ENCODE measurements at regions of chr6 and their contacts with region 1.

Region 1: DNA sequence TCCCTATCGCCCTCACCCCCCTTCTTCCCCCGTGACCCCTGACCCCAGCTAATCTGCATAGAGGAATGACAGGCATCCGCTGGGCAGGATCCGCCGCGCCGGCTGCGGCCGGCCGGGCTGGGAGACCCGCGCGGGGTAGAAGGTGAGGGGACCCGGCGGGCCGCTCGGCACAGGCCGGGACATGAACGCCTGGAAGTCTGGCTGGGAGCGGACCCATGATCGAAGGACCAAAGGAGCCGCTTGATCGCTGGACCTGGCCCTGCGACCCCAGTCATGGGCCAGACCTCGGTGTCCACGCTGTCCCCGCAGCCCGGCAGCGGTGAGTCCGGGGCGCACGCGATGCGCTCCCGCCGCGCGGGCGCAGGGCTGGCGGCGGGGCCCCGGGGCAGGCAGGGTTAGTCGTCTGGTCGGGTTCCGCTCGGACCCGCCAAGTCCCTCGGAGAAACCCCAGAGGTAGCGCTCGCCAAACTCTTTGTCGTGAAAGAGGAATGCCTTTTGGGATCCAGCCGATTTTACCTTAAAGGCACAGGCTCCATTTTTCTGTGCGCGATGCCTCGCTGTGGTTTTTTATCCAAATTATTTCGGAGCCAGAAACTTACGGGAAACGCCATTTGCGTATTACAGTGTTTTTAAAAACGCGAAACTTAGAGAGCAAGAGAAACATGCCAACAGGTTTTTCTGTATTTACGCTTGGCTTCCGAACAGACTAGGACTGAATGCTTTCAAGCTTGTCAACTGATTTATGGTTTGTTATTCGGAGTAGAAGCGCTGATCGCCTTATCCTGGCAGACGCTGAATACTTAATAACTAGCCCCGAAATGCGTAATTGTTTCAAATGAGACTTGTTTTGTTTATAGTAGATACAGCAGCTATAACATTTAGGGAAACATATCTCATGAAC is at the start of gene PHACTR2:
- DNase-seq: peak; percentile 91
- H3K4me3 ChIP-seq: peak within 1 kb of the TSS; percentile 56 to 85 (median 78)
- H3K27ac ChIP-seq: peak within 1 kb of the TSS; percentile 87 to 95 (median 91)
- H3K4me1 ChIP-seq: peaks cover 0 to 15% (median 2%) of the 10 kb centered on the region in 4 donors
- H3K27me3 ChIP-seq: no peaks in the 10 kb centered on the region
- CTCF ChIP-seq: no peak
- EP300 ChIP-seq: no peak
- POLR2A ChIP-seq: peak in 1 of 2 donors; percentile 20
- total RNA-seq, gene PHACTR2: 17.6 to 51.9 (median 28.0) TPM

Region 2: DNA sequence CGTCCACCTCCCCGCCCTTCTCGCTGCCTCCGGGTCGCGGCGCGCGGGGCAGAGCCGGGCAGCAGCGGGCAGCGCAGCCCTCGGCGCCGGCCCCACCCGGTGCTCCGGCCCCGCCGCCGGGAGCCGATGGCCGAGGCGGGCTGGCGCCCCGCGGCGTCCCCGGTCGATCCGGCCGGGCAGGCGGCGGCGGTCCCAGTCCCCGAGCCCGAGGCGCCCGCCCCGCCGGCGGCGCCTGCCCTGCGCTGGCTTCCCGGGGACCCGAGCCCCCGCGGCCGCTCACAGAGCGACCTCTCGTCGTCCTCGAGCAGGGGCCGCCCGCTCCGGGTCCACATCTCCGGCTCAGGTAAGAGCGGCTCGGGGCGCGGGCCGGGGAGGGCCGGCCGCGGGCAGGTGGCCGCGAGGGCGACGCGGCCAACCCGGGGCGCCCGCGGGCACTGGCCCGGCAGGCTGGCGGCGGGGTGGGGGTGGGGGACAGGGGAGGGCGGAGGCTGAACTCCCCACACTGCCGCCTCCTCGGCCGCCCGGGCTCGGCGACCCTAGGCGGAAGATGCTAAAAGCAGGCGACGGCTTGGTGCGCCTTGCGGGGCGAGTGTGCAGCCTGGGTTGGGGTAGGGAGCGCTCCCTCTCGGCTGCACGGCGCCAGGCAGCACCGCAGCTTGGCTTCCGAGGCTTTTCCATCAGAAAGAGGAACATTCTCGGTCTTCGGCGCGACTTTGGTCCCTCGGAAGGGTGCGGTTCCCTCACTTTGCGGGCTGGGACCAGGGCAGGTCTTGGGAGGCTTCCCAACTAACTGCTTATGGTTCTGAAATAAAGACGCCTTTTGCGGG is 141.1 kb before region 1 on chr6:
- intact Hi-C with region 1: no loop called
- DNase-seq: peak; percentile 79
- H3K4me3 ChIP-seq: peak overlapping the region; percentile 37 to 64 (median 59)
- H3K27ac ChIP-seq: peak overlapping the region; percentile 50 to 69 (median 64)
- H3K4me1 ChIP-seq: peaks cover 0 to 15% (median 9%) of the 10 kb centered on the region in 4 donors
- H3K27me3 ChIP-seq: no peaks in the 10 kb centered on the region
- CTCF ChIP-seq: peak in 1 of 4 experiments; percentile 29
- EP300 ChIP-seq: no peak
- POLR2A ChIP-seq: no peak

Region 3: DNA sequence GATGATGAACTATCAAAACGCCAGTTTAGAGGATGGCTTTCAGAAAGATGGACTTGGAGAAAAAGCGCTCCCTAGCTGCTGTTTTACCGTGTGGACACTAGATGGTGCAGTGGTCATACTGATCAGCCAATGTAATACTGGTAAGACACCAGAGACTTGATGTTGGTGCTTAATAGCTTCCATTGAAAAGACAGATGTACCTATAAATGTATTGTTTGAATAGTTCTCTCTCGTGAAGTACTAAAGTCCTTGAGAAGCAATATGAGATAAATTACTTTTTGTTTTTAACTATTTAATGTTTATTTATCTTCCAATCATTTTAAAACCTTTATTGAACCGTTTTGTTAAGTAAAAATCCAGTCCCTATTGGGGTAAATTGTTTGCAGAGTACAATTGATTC is 102.7 kb before region 1 on chr6:
- intact Hi-C with region 1: loop called (anchors 2 kb)
- DNase-seq: peak; percentile 74
- H3K4me3 ChIP-seq: no peak overlapping the region
- H3K27ac ChIP-seq: peak overlapping the region in 1 of 4 donors; percentile 6
- H3K4me1 ChIP-seq: no peaks in the 10 kb centered on the region
- H3K27me3 ChIP-seq: no peaks in the 10 kb centered on the region
- CTCF ChIP-seq: peak; percentile 78 to 90 (median 88)
- EP300 ChIP-seq: no peak
- POLR2A ChIP-seq: no peak

Region 4: DNA sequence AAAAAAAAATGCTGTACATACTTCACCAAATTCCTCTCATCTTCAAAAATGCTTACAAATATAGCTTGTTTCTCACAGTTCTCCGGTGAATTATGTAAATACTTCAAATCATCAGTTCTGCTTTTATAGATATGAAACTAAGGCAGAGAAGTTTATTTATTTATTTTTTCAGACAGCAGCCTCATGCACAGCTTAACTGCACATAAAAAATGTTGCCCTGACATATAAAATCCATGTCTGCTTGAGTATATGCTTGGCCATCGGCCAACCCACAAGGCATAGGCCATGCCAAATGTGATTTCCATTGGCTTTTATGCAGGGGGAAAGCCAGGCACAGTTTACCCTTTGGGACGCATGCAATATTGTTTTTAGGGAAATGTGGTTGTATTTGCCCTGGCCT is 57.7 kb before region 1 on chr6:
- intact Hi-C with region 1: no loop called
- DNase-seq: no peak
- H3K4me3 ChIP-seq: no peak overlapping the region
- H3K27ac ChIP-seq: no peak overlapping the region
- H3K4me1 ChIP-seq: peaks cover 0 to 17% (median 10%) of the 10 kb centered on the region in 4 donors
- H3K27me3 ChIP-seq: no peaks in the 10 kb centered on the region
- CTCF ChIP-seq: no peak
- EP300 ChIP-seq: no peak
- POLR2A ChIP-seq: no peak

Region 5: GRCh38 chr6:143745166-143746133 is 67.3 kb after region 1 on chr6:
- intact Hi-C with region 1: loop called (anchors 5 kb)
- DNase-seq: no peak
- H3K4me3 ChIP-seq: peak overlapping the region in 3 of 4 donors; percentile 6 to 27 (median 17)
- H3K27ac ChIP-seq: peak overlapping the region; percentile 24 to 74 (median 68)
- H3K4me1 ChIP-seq: peaks cover 0 to 41% (median 38%) of the 10 kb centered on the region in 4 donors
- H3K27me3 ChIP-seq: no peaks in the 10 kb centered on the region
- CTCF ChIP-seq: no peak
- EP300 ChIP-seq: no peak
- POLR2A ChIP-seq: no peak

Region 6: DNA sequence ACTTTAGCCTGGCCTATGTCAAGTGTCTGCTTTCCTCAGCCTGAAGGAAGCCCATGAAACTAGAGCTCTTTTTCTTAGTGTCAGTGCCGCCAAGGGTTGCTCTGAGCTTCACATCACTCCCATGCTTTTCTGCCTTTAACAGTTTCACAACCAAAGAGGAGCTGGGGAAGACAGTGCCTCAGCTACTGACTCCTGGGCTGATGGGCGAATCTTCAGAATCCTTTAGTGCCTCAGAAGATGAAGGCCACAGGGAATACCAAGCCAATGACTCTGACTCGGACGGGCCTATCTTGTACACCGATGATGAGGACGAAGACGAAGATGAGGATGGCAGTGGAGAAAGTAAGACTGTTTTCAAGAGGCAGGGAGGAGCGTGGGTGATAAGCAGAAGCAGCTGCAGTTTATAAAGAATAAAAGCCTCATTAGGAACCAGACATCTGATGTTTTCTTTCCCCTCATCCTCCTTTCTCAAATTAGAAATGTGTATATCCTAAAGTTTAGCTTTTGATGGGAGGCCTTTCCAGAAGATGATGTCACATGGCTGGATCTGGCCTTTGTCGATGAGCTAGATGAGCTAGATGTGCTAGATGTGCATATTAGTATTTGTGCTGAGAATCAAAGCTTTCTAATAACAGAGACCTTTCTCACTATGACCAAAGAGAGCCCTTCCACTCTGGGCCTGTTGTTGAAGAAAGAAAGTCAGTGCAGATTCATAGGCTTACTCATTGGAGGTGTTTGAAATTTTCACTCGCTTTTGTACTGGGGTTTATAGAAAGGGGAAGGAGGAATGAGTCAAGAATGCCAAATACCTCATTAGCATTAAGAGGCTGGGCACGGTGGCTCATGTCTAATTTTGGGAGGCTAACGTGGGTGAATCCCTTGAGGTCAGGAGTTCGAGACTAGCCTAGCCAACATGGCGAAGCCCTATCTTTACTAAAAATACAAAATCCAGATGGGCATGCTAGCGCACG is 94.3 kb after region 1 on chr6:
- intact Hi-C with region 1: loop called (anchors 5 kb)
- DNase-seq: no peak
- H3K4me3 ChIP-seq: no peak overlapping the region
- H3K27ac ChIP-seq: peak overlapping the region; percentile 19 to 59 (median 50)
- H3K4me1 ChIP-seq: peaks cover 0 to 45% (median 31%) of the 10 kb centered on the region in 4 donors
- H3K27me3 ChIP-seq: no peaks in the 10 kb centered on the region
- CTCF ChIP-seq: no peak
- EP300 ChIP-seq: no peak
- POLR2A ChIP-seq: no peak

Region 7: GRCh38 chr6:143940011-143940597 is 262.0 kb after region 1 on chr6:
- intact Hi-C with region 1: no loop called
- DNase-seq: no peak
- H3K4me3 ChIP-seq: no peak overlapping the region
- H3K27ac ChIP-seq: no peak overlapping the region
- H3K4me1 ChIP-seq: no peaks in the 10 kb centered on the region
- H3K27me3 ChIP-seq: no peaks in the 10 kb centered on the region
- CTCF ChIP-seq: peak in 2 of 4 experiments; percentile 42 to 43
- EP300 ChIP-seq: no peak
- POLR2A ChIP-seq: no peak